ENCODE measurements at regions of chr13 and their contacts with region 1.

Region 1: DNA sequence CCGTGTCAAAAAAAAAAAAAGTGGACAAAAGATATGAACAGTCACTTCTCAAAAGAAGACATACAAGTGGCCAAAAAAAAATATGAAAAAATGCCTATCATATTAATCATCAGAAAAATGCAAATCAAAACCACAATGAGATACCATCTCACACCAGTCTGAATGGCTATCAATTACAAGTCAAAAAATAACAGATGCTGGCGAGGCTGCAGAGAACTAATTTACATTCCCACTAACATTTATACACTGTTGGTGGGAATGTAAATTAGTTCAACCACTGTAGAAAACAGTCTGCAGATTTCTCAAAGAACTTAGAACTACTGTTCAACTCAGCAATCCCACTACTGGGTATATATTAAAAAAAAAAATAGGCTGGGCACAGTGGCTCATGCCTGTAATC is 26.5 kb upstream of the FOXO1 start:
- DNase-seq: no peak
- CTCF ChIP-seq: no peak

Region 2: DNA sequence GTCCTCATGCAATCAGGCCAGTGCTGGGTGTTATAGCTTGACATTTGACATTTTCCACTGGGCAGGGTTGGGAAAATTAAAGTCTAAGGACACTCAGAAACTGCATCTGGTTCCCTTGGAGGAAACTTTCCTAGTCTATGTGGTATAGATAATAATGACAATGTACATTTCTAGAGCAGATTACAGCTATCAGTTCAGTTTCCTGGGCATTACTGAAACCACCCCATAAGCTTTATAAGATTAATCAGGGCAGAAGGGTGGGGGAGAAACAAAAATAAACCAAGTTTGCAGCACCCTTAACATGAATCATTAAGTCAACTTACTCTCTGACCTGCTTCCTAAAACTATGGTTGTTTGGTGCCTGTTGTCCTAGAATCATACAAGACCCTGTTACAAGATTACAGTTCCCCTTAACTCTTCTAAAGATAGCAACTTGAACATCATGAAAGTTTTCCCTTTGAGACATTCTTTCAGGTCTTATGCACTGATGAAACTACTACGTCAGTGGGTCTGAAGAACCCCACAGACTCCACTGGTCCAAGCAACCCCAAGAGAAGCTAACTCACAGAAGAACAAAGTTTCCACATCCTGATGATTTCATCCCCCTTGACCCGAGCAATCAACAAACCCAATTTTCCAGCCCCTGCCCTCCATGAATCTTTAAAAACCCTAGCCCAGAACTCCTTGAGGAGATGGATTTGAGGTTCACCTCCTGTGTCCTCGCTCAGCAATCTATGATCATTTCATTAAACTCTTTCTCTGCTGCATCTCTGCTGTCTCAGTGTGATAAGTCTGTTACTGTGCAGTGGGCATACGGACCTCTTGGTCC is 363.1 kb before region 1 on chr13:
- in situ Hi-C with region 1: no loop called
- DNase-seq: no peak
- CTCF ChIP-seq: no peak

Region 3: DNA sequence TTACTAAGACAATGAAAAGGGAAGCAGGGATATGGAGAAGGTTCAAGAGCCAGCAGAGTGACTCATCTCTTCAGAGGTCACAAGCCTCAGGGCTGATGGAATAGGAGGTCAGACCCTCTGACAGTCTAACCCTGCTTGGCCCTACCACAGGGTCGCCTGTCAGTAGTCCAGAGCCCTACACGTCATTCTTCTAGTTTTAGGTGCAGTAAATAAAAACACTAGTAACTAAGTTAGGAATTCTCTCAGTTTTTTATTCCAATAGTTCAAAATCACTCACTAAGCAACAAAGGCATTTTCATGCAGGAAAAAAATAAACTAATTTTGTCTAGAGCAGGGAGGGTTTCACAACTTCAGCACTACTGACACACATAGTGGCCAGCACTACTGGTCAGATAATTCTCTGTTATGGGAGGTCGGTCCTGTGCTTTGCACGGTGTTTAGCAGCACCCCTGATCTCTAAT is 53.7 kb before region 1 on chr13:
- in situ Hi-C with region 1: no loop called
- DNase-seq: no peak
- CTCF ChIP-seq: no peak

Region 4: DNA sequence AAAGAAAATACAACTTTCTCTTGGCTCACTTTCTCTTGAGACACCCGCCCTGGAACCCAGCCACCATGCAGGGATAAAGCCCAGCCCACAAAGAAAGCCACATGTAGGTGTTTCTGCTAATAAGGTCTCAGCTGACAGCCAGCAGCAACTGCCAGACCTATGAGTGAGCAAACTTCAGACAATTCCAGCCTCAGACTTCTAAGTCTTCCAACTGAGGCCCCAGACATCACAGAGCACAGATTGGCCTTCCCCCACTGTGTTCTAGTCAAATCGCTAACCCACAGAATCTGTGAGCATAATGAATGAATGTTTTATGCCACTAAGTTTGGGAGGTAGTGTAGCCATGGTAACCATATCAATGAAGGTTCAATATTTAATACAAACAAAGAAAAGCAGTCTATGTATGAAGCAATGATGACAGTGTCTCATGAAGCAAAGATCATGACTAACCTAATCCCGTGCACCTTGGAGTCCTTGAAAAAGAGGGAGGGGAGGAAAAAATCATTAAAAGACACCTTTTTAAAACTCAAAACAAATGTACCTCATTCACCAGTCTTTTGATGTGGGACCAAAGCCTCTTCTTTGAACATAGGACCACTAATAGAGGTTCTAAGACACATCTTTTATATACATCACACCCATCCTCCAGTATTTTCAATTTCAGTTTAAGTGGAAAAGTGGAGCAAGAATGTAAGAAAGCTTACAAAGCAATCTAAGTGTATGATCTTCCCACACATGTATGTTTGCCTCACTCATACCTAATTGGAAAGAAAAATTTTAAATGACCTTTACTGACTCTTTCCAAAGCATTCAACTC is 71.8 kb after region 1 on chr13:
- in situ Hi-C with region 1: loop called (anchors 10 kb)
- DNase-seq: no peak
- CTCF ChIP-seq: no peak

Region 5: GRCh38 chr13:40874138-40874779 is 181.3 kb after region 1 on chr13:
- in situ Hi-C with region 1: no loop called
- DNase-seq: no peak
- CTCF ChIP-seq: no peak

Region 6: GRCh38 chr13:40992678-40993518 is 300.0 kb after region 1 on chr13:
- in situ Hi-C with region 1: no loop called
- DNase-seq: no peak
- CTCF ChIP-seq: peak; percentile 17

Measured in GM13976 (cell line).